ENCODE measurements at regions of chr4 and their contacts with region 1.

Region 1: DNA sequence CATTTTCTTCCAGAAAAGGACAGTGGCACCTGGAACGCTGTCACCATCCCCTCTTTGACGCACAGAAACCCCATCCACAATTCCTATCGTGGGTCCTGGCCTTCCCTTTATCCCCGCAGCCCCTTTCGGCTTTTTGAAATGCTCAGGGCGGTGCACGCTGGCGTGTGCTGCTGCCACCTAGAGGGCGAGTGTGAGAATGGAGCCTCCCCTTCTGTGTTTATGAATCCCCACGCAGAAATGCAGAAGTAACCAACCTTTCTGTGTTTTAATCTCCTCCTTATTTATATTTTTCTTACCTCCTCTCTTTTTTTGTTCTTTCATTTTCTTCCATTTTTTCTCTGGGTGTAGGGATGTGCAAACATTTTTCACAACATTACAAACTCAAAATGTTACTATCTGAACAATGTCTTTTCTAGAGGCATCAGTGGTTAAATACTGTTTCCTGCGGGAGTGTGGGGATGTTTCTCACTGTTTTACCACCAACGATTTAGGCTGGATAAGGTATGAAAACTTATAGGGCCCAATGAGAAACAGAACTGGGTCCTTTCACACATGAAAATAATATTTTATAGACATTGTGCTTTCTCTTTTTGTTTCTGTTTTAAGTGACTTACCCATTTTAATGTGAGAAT is 50.0 kb downstream of the TMA16 start:
- DNase-seq: peak; percentile 77
- CTCF ChIP-seq: peak; percentile 93

Region 2: DNA sequence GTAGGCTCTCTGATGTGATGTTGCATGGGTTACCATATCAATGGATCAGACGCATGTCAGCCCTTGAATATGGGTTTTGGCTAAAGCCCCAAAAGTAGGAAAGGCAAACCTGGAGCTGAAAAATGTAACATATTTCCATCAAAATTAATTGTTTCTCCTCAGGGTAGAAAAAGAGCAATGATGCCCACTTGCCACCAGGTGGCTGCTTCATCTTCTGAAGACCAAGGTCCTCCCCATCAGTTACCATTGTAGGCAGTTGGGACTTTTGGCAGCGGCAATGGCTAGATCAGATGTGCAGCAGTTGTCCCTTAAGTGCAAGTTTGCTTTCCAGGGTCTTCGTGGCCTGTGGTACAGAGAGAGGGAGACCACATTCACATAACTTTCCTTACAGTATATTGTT is 496.1 kb before region 1 on chr4:
- CTCF ChIA-PET with region 1: interaction called, 11 read pairs
- POLR2A ChIA-PET with region 1: no interaction called
- DNase-seq: peak; percentile 32
- CTCF ChIP-seq: peak; percentile 49

Region 3: GRCh38 chr4:163484906-163485305 is 59.6 kb before region 1 on chr4:
- CTCF ChIA-PET with region 1: interaction called, 99 read pairs
- POLR2A ChIA-PET with region 1: no interaction called
- DNase-seq: peak; percentile 36
- CTCF ChIP-seq: peak; percentile 55

Region 4: GRCh38 chr4:163554870-163555465 is 10.4 kb after region 1 on chr4:
- CTCF ChIA-PET with region 1: interaction called, 101 read pairs
- POLR2A ChIA-PET with region 1: no interaction called
- DNase-seq: no peak
- CTCF ChIP-seq: peak; percentile 51

Region 5: GRCh38 chr4:163591614-163592020 is 47.1 kb after region 1 on chr4:
- CTCF ChIA-PET with region 1: interaction called, 10 read pairs
- POLR2A ChIA-PET with region 1: no interaction called
- DNase-seq: peak; percentile 32
- CTCF ChIP-seq: no peak

Region 6: GRCh38 chr4:163755013-163755412 is 210.5 kb after region 1 on chr4:
- CTCF ChIA-PET with region 1: interaction called, 158 read pairs
- POLR2A ChIA-PET with region 1: no interaction called
- DNase-seq: peak; percentile 15
- CTCF ChIP-seq: peak; percentile 33

Region 7: GRCh38 chr4:164068392-164068791 is 523.9 kb after region 1 on chr4:
- CTCF ChIA-PET with region 1: no interaction called
- POLR2A ChIA-PET with region 1: no interaction called
- DNase-seq: no peak
- CTCF ChIP-seq: no peak

Measured in GM10248 (cell line).